ENCODE measurements at regions of chr17 and their contacts with region 1.

Region 1: DNA sequence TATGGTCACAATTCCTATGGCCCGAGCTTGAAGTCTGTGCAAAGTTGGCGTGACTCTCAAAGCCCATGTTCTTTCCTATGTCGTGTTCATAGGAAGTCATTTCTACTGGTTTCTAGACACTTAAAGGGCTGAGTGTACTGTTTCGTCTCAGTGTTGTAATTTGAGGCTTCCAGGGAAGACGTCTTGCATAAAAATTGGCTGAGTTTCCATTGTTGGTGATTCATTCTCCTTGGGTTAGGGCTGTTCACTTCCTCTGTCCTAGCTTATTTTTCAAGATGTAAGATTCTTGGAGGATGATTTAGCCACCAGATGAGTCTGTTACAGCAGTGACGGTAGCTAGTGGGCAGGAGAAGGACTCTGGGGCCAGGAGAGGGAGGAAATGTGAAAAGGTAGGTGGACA is 43.1 kb downstream of the PIK3R5 start:
- DNase-seq: no peak
- ATAC-seq: no peak
- H3K4me3 ChIP-seq: no peak overlapping the region
- H3K27ac ChIP-seq: no peak overlapping the region
- H3K4me1 ChIP-seq: peaks cover 50% of the 10 kb centered on the region
- H3K27me3 ChIP-seq: no peaks in the 10 kb centered on the region
- CTCF ChIP-seq: no peak
- EP300 ChIP-seq: no peak
- POLR2A ChIP-seq: no peak
- RAD21 ChIP-seq: no peak

Region 2: GRCh38 chr17:8673612-8674011 is 248.8 kb before region 1 on chr17:
- CTCF ChIA-PET with region 1: no interaction called
- POLR2A ChIA-PET with region 1: no interaction called
- RAD21 ChIA-PET with region 1: no interaction called
- SMC1A ChIA-PET with region 1: no interaction called
- in situ Hi-C with region 1: no loop called
- intact Hi-C with region 1: no loop called
- DNase-seq: no peak
- ATAC-seq: no peak
- H3K4me3 ChIP-seq: no peak overlapping the region
- H3K27ac ChIP-seq: no peak overlapping the region
- H3K4me1 ChIP-seq: no peaks in the 10 kb centered on the region
- H3K27me3 ChIP-seq: no peaks in the 10 kb centered on the region
- CTCF ChIP-seq: no peak
- EP300 ChIP-seq: no peak
- POLR2A ChIP-seq: no peak
- RAD21 ChIP-seq: no peak

Region 3: DNA sequence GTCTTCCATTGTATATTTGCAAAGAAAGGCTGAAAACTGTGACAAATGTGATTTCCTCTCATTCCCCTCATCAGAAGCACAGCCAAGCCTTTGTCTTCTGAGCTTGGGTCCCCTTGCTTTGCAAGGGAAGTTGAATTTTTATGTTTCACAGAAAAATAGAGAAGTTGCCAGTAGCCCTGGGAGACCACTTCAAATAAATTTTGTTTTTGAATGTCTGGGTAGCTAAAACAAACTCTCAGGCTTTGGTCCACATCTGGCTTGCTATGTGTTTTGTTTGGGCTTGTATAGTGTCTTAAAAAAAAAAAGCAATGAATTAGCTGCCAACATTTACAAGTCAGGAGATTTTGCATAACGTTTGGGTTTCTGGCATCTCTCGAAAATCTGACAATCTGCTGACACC is 79.1 kb before region 1 on chr17:
- CTCF ChIA-PET with region 1: no interaction called
- POLR2A ChIA-PET with region 1: no interaction called
- RAD21 ChIA-PET with region 1: no interaction called
- SMC1A ChIA-PET with region 1: no interaction called
- in situ Hi-C with region 1: no loop called
- intact Hi-C with region 1: no loop called
- DNase-seq: no peak
- ATAC-seq: no peak
- H3K4me3 ChIP-seq: no peak overlapping the region
- H3K27ac ChIP-seq: peak overlapping the region; percentile 62
- H3K4me1 ChIP-seq: peaks cover 18% of the 10 kb centered on the region
- H3K27me3 ChIP-seq: no peaks in the 10 kb centered on the region
- CTCF ChIP-seq: no peak
- EP300 ChIP-seq: no peak
- POLR2A ChIP-seq: no peak
- RAD21 ChIP-seq: no peak

Region 4: GRCh38 chr17:8880476-8881036 is 41.9 kb before region 1 on chr17:
- CTCF ChIA-PET with region 1: no interaction called
- POLR2A ChIA-PET with region 1: no interaction called
- RAD21 ChIA-PET with region 1: no interaction called
- SMC1A ChIA-PET with region 1: no interaction called
- in situ Hi-C with region 1: no loop called
- intact Hi-C with region 1: no loop called
- DNase-seq: no peak
- ATAC-seq: no peak
- H3K4me3 ChIP-seq: no peak overlapping the region
- H3K27ac ChIP-seq: no peak overlapping the region
- H3K4me1 ChIP-seq: no peaks in the 10 kb centered on the region
- H3K27me3 ChIP-seq: no peaks in the 10 kb centered on the region
- CTCF ChIP-seq: no peak
- EP300 ChIP-seq: no peak
- POLR2A ChIP-seq: no peak
- RAD21 ChIP-seq: no peak

Region 5: DNA sequence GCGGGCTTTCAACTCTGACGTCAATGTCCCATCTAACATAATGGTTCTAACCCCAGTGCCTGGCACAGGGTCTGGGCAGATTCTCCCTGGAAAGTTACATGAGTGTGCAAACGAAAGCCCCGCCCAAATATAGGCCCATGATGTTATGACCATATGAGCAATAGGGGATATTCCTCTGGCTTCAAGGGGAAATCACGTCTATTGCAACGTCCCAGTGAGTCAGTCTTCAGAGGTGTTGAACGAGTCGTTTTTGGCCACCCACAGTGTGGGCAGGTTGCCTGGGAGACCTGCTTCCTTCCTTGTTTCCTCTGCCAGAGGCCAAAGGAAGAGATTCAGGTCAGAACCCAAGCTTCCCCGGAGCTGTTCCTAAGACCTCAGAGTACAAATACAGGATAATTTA is 12.7 kb after region 1 on chr17:
- CTCF ChIA-PET with region 1: interaction called, 9 read pairs
- POLR2A ChIA-PET with region 1: interaction called, 22 read pairs
- RAD21 ChIA-PET with region 1: interaction called, 10 read pairs
- SMC1A ChIA-PET with region 1: interaction called, 63 read pairs
- in situ Hi-C with region 1: no loop called
- intact Hi-C with region 1: loop called (anchors 2 kb)
- DNase-seq: no peak
- ATAC-seq: peak; percentile 69
- H3K4me3 ChIP-seq: no peak overlapping the region
- H3K27ac ChIP-seq: peak overlapping the region; percentile 59
- H3K4me1 ChIP-seq: peaks cover 29% of the 10 kb centered on the region
- H3K27me3 ChIP-seq: no peaks in the 10 kb centered on the region
- CTCF ChIP-seq: no peak
- EP300 ChIP-seq: no peak
- POLR2A ChIP-seq: no peak
- RAD21 ChIP-seq: no peak

Region 6: DNA sequence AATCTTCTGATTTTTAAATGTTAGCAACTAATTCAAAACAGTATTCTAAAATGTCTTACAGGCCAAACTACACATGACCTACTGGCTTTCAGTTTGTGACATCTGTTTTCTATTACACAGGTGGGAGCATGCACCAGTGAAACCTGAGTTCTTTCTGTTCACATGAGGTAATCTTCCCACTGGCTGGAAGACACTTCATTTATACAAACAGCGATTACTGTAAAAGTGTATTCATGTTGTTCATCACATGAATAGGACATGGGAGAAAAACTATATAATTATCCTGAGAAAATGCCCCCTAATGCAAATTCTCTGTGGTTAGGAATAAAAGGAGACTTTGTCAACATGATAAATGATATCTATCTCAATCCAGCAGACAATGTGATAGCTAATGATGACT is 54.2 kb after region 1 on chr17:
- CTCF ChIA-PET with region 1: no interaction called
- POLR2A ChIA-PET with region 1: no interaction called
- RAD21 ChIA-PET with region 1: no interaction called
- SMC1A ChIA-PET with region 1: interaction called, 5 read pairs
- in situ Hi-C with region 1: no loop called
- intact Hi-C with region 1: loop called (anchors 5 kb)
- DNase-seq: no peak
- ATAC-seq: peak; percentile 71
- H3K4me3 ChIP-seq: no peak overlapping the region; the same call in 1 of the 2 replicates
- H3K27ac ChIP-seq: peak overlapping the region; percentile 81
- H3K4me1 ChIP-seq: peaks cover 26% of the 10 kb centered on the region
- H3K27me3 ChIP-seq: no peaks in the 10 kb centered on the region
- CTCF ChIP-seq: no peak
- EP300 ChIP-seq: no peak
- POLR2A ChIP-seq: no peak
- RAD21 ChIP-seq: no peak